GM12878 (cell line): ENCODE measurements at regions of chrX and their contacts with region 1.

Region 1: GRCh38 chrX:149040873-149041535 is 464.1 kb downstream of the IDS start:
- DNase-seq: no peak
- ATAC-seq: peak; percentile 82
- H3K4me3 ChIP-seq: no peak overlapping the region
- H3K27ac ChIP-seq: no peak overlapping the region
- H3K4me1 ChIP-seq: no peaks in the 10 kb centered on the region
- H3K27me3 ChIP-seq: no peaks in the 10 kb centered on the region
- CTCF ChIP-seq: no peak
- EP300 ChIP-seq: no peak
- POLR2A ChIP-seq: no peak
- RAD21 ChIP-seq: 0 out of 2 replicates have a peak, but pooled peaks have one; percentile 3

Region 2: GRCh38 chrX:149010009-149010852 is 30.8 kb before region 1 on chrX:
- CTCF ChIA-PET with region 1: interaction called, 4 read pairs
- POLR2A ChIA-PET with region 1: no interaction called
- RAD21 ChIA-PET with region 1: interaction called, 13 read pairs
- SMC1A ChIA-PET with region 1: interaction called, 10 read pairs
- in situ Hi-C with region 1: no loop called
- intact Hi-C with region 1: no loop called
- DNase-seq: no peak
- ATAC-seq: no peak
- H3K4me3 ChIP-seq: no peak overlapping the region
- H3K27ac ChIP-seq: no peak overlapping the region
- H3K4me1 ChIP-seq: no peaks in the 10 kb centered on the region; the same call in 1 of the 2 replicates
- H3K27me3 ChIP-seq: no peaks in the 10 kb centered on the region
- CTCF ChIP-seq: no peak
- EP300 ChIP-seq: no peak
- POLR2A ChIP-seq: no peak
- RAD21 ChIP-seq: no peak

Region 3: DNA sequence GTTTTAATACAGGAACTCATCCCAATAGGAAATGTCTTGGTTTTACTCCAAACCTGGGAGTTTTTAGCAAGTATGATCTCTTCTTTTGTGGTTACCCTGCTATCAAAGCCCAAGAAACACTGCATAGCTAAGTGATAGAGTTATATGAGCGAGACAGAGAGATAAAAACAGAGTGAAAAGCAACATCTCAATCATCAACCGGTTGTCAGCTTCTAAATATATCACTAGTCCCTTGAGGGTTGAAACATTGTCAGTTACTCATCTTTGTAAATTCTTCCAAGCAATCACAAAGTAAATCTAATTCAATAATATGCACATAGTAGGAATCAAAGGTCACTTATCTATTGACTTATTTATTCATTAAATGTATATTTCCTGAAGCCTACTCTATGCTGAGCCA is 19.8 kb before region 1 on chrX:
- CTCF ChIA-PET with region 1: interaction called, 4 read pairs
- POLR2A ChIA-PET with region 1: no interaction called
- RAD21 ChIA-PET with region 1: interaction called, 9 read pairs
- SMC1A ChIA-PET with region 1: interaction called, 15 read pairs
- in situ Hi-C with region 1: no loop called
- intact Hi-C with region 1: no loop called
- DNase-seq: no peak
- ATAC-seq: peak; percentile 53
- H3K4me3 ChIP-seq: no peak overlapping the region
- H3K27ac ChIP-seq: no peak overlapping the region
- H3K4me1 ChIP-seq: no peaks in the 10 kb centered on the region
- H3K27me3 ChIP-seq: no peaks in the 10 kb centered on the region
- CTCF ChIP-seq: no peak
- EP300 ChIP-seq: no peak
- POLR2A ChIP-seq: no peak
- RAD21 ChIP-seq: no peak

Region 4: DNA sequence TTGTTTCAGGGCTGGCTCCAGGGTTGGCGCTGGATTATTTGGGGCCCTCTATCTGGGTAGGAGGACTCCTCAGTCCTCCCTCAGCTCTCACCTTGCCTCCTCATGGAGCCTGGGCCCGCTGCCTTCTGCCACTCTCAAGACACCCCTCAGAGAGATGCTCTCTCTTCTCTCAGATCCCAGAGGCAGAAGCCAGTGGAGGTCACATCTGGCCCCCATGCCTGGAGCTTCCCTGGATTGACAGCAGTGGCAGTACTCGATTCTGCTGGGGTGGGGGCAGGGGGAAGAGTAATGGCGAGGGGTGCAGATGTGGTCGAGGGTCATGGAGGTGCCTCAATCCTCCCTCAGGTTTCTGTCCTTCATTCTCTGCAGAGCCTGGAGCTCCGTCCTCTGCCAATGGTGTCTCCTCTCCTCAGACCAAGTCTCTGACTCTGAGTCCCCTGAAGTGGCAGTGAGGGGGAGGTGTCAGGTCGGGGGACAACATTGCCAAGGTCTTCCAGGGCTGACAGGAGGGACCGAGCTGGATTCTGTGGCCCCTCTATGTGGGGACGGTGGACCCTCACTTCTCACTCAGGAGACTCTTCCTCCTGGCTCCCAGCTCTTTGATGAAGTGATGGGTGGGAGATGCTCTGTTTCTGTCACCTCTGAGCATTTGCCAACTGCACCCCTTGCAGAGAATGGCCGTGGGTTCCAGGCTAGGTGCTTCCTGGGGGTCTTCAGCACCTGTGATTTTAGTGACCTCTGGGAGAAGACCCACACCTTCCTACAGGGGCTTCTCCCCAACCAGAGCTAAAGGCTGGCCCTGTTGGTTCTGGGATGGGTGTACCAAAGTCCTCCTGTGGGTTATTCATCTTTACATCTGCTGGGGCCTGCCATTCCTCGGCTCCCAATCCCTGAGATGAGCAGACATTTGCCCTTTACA is 722.0 kb after region 1 on chrX:
- CTCF ChIA-PET with region 1: no interaction called
- POLR2A ChIA-PET with region 1: no interaction called
- RAD21 ChIA-PET with region 1: no interaction called
- SMC1A ChIA-PET with region 1: no interaction called
- in situ Hi-C with region 1: no loop called
- intact Hi-C with region 1: no loop called
- DNase-seq: no peak
- ATAC-seq: no peak
- H3K4me3 ChIP-seq: no peak overlapping the region
- H3K27ac ChIP-seq: no peak overlapping the region
- H3K4me1 ChIP-seq: no peaks in the 10 kb centered on the region
- H3K27me3 ChIP-seq: no peaks in the 10 kb centered on the region
- CTCF ChIP-seq: no peak
- EP300 ChIP-seq: no peak
- POLR2A ChIP-seq: no peak
- RAD21 ChIP-seq: no peak